ENCODE measurements at regions of chr7 and their contacts with region 1.

Region 1: DNA sequence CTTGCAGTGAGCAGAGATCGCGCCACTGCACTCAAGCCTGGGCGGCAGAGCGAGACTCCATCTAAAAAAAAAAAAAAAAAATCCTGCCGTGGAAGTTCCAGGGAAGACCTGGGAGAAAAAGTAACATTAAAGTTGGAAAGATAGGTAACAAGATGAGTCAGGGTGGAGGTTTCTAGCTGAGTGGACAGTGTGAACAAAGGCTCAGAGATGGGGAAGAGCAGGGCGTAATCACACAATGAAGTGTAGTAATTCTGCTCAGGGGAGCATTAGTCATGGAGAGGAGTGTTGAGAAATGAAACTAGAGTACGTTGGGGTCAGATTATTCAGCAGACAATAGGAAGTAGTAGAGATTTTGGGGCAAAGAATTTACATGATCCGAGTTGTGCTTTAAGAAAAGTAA is 21.6 kb upstream of the WASL start:
- DNase-seq: peak; percentile 97
- H3K4me3 Mint-ChIP-seq: peak overlapping the region; percentile 67
- H3K27ac Mint-ChIP-seq: peak overlapping the region; percentile 93
- H3K4me1 Mint-ChIP-seq: peaks cover 38% of the 10 kb centered on the region
- H3K27me3 Mint-ChIP-seq: no peaks in the 10 kb centered on the region
- CTCF ChIP-seq: no peak

Region 2: DNA sequence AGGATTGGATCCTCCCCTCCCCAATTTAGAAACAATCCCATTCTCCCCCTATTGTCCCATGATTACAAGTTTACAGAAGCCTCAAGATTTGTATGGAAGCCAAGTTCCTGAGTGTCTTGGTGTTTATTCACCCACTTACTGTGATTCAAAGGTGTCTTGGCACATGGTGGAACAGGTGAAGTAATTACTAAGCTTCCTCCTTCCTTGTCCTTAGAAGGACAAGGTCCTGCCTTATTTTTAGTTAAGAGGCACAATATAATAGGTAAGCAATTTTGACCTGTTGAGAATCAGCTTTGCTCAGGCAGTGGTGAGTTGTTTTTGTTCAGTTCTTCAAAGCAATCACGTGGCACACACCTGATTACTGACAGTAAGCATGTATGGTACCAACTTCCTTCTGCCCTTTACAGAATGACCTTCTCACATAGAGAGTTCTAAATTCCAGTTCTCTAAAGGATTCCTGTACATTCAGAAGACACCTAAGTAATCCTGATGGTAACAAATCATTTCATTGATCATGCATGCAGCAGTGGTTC is 509.9 kb before region 1 on chr7:
- CTCF ChIA-PET with region 1: no interaction called
- POLR2A ChIA-PET with region 1: no interaction called
- intact Hi-C with region 1: no loop called
- DNase-seq: no peak
- H3K4me3 Mint-ChIP-seq: no peak overlapping the region
- H3K27ac Mint-ChIP-seq: no peak overlapping the region
- H3K4me1 Mint-ChIP-seq: no peaks in the 10 kb centered on the region
- H3K27me3 Mint-ChIP-seq: peaks cover 7% of the 10 kb centered on the region
- CTCF ChIP-seq: no peak

Region 3: DNA sequence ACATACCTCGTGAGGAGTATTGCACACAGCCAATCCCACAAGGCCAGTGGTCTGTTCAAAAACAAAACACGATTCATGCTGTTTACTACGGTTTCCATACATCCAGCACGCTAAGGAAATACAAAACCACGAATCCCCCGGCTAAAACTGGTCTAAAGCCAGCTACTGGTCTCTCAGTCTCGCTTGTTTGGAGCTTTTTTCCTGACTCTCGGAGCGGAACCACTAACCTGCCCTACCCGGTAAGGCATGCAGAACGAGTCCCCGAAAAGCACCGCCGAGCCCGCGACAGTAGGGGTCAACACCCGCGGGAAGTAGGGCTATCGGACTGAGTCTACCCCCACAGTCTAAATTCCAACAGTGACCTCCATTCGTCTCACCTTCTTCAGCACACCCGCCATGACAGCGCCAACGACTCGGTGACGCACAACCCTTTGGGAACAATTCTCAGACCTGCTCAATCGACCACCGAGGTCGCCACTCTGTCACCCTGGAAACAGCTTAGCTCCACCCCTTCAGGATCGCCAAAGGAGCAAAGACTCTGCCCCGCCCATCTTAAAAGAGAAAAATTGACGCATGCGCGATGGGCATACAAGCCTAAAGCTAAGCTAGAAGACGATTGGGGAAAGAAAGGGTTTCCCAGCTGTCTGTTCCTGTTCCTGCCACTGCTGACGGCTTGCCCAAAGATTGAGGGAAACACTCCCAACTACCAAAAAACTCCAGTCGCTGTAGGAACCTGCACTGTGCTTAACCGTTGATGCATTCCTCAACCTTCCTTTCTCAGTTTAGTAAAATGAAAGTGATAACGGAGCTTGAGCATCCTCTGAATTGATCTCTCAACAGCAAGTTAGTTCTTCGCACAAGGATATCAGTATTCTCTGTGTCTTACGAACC is 212.7 kb before region 1 on chr7 and contains the start of gene NDUFA5:
- CTCF ChIA-PET with region 1: no interaction called
- POLR2A ChIA-PET with region 1: interaction called, 10 read pairs
- intact Hi-C with region 1: no loop called
- DNase-seq: peak; percentile 99
- H3K4me3 Mint-ChIP-seq: no peak within 1 kb of the TSS
- H3K27ac Mint-ChIP-seq: no peak within 1 kb of the TSS
- H3K4me1 Mint-ChIP-seq: peaks cover 5% of the 10 kb centered on the region
- H3K27me3 Mint-ChIP-seq: no peaks in the 10 kb centered on the region
- CTCF ChIP-seq: no peak
- total RNA-seq, gene NDUFA5: 71.9 and 72.8 TPM in 2 replicates

Region 4: GRCh38 chr7:123757095-123757494 is 13.3 kb before region 1 on chr7:
- CTCF ChIA-PET with region 1: interaction called, 12 read pairs
- POLR2A ChIA-PET with region 1: interaction called, 367 read pairs
- intact Hi-C with region 1: no loop called
- DNase-seq: peak; percentile 24
- H3K4me3 Mint-ChIP-seq: no peak overlapping the region
- H3K27ac Mint-ChIP-seq: no peak overlapping the region
- H3K4me1 Mint-ChIP-seq: peaks cover 23% of the 10 kb centered on the region
- H3K27me3 Mint-ChIP-seq: no peaks in the 10 kb centered on the region
- CTCF ChIP-seq: no peak

Region 5: DNA sequence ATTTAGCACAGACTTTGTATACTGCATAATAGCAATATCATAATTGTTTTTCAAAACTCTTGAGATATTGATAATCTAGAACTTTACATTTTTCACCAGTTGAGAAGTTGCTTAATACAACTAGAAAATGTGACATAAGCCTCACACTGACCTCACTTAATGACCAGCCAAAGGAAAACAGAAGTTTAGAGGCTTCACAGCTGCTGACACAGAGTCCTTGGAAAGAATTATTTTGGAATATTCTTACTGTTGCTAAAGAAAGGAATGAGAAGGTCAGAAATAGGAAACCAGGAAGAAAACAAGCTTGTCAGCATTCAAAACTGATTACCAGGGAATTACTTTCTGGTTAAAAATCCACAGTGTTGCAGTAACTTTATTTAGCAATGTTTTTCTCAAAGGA is 13.9 kb after region 1 on chr7:
- CTCF ChIA-PET with region 1: interaction called, 5 read pairs
- POLR2A ChIA-PET with region 1: interaction called, 32 read pairs
- intact Hi-C with region 1: no loop called
- DNase-seq: no peak
- H3K4me3 Mint-ChIP-seq: no peak overlapping the region
- H3K27ac Mint-ChIP-seq: no peak overlapping the region
- H3K4me1 Mint-ChIP-seq: no peaks in the 10 kb centered on the region
- H3K27me3 Mint-ChIP-seq: no peaks in the 10 kb centered on the region
- CTCF ChIP-seq: no peak

Region 6: GRCh38 chr7:123792547-123792946 is 22.2 kb after region 1 on chr7:
- CTCF ChIA-PET with region 1: interaction called, 45 read pairs
- POLR2A ChIA-PET with region 1: interaction called, 42 read pairs
- intact Hi-C with region 1: no loop called
- DNase-seq: no peak
- H3K4me3 Mint-ChIP-seq: no peak overlapping the region
- H3K27ac Mint-ChIP-seq: no peak overlapping the region
- H3K4me1 Mint-ChIP-seq: peaks cover 6% of the 10 kb centered on the region
- H3K27me3 Mint-ChIP-seq: no peaks in the 10 kb centered on the region
- CTCF ChIP-seq: no peak